Right ventricle myocardium superior (tissue), 1 donor: ENCODE measurements at regions of chr11 and their contacts with region 1.

Region 1: GRCh38 chr11:65637794-65638317 is at the start of gene SIPA1:
- DNase-seq: peak; percentile 84
- ATAC-seq: peak; percentile 92
- total RNA-seq, gene SIPA1: 22.5 TPM

Region 2: GRCh38 chr11:65700391-65700790 is 62.5 kb after region 1 on chr11:
- intact Hi-C with region 1: loop called (anchors 10 kb)
- DNase-seq: no peak
- ATAC-seq: no peak